Lower leg skin (tissue), 4 donors: ENCODE measurements at regions of chr19 and their contacts with region 1.

Region 1: GRCh38 chr19:58248886-58249285 is 20.2 kb downstream of the ZNF544 start:
- DNase-seq: no peak
- H3K4me3 ChIP-seq: no peak overlapping the region
- CTCF ChIP-seq: no peak
- POLR2A ChIP-seq: no peak

Region 2: DNA sequence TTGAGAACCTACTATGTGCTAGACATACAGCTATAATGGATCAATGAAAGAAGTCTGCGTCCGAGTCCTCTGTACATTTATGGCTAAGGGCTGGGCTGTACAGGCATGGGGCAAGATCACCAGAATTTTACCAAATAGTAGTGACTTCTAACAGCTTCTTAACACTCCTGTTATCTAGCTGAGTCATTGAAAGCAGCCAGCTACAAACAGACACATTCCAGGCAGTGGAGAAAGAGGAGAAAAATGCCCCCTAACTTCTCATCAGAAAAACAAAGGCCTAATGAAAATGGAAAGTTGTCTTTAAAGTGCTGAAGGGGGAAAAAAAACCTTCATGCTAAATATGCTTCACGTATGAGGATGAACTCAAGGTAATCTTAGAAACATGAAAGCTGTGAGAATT is 1757.5 kb before region 1 on chr19:
- intact Hi-C with region 1: loop called (anchors 2 kb)
- DNase-seq: no peak
- H3K4me3 ChIP-seq: no peak overlapping the region
- CTCF ChIP-seq: no peak
- POLR2A ChIP-seq: no peak